Activated CD8-positive, alpha-beta T cell treated with anti-CD3 and anti-CD28 coated beads, Interleukin-2, amount 10 ng/mL, durations not matched to agents 7 days and 5 days (primary cell): ENCODE measurements at regions of chr2 and their contacts with region 1.

Region 1: GRCh38 chr2:38535744-38536506 is 66.8 kb downstream of the HNRNPLL start:
- DNase-seq: peak; percentile 83
- ATAC-seq: peak; percentile 97
- H3K4me3 Mint-ChIP-seq: peak overlapping the region; percentile 50
- H3K27ac Mint-ChIP-seq: no peak overlapping the region
- H3K4me1 Mint-ChIP-seq: peaks cover 3% of the 10 kb centered on the region
- H3K27me3 Mint-ChIP-seq: peaks cover 35% of the 10 kb centered on the region

Region 2: DNA sequence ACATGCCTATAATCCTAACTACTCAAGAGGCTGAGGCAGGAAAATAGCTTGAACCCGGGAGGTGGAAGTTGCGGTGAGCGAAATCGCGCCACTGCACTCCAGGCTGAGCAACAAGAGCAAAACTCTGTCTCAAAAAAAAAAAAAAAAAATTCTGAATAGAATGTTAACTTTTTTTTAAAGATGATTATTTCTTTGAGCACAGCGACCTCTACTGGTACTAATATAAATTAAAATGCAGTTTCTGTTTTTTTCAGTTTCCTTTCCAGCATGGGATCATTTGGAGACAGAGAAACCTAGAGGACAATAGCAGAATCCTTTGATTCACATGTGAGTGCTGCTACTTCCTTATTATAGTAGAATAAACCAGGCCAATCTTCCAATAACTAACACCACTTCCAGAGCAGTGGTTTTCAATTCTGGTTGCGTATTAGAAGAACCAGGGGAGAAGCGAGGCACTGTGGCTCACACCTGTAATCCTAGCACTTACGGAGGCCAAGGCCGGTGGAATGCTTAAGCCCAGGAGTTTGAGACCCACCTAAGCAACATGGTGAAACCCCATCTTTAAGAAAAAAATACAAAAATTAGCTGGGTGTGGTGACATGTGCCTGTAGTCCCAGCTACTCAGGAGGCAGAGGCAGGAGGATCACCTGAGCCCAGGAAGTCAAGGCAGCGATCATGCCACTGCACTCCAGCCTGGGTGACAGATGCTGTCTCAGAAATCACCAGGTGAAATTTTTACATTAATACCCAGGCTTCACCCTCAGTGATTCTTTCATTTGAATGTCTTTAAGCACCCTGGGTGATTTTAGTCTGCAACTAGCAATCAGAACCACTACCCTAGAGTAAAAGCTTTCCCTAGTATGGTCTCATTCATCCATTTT is 205.2 kb after region 1 on chr2:
- CTCF ChIA-PET with region 1: interaction called, 22 read pairs
- POLR2A ChIA-PET with region 1: interaction called, 4 read pairs
- DNase-seq: no peak
- ATAC-seq: peak; percentile 25
- H3K4me3 Mint-ChIP-seq: no peak overlapping the region
- H3K27ac Mint-ChIP-seq: no peak overlapping the region
- H3K4me1 Mint-ChIP-seq: peaks cover 31% of the 10 kb centered on the region
- H3K27me3 Mint-ChIP-seq: no peaks in the 10 kb centered on the region